A673 (cell line): ENCODE measurements at regions of chrX and their contacts with region 1.

Region 1: DNA sequence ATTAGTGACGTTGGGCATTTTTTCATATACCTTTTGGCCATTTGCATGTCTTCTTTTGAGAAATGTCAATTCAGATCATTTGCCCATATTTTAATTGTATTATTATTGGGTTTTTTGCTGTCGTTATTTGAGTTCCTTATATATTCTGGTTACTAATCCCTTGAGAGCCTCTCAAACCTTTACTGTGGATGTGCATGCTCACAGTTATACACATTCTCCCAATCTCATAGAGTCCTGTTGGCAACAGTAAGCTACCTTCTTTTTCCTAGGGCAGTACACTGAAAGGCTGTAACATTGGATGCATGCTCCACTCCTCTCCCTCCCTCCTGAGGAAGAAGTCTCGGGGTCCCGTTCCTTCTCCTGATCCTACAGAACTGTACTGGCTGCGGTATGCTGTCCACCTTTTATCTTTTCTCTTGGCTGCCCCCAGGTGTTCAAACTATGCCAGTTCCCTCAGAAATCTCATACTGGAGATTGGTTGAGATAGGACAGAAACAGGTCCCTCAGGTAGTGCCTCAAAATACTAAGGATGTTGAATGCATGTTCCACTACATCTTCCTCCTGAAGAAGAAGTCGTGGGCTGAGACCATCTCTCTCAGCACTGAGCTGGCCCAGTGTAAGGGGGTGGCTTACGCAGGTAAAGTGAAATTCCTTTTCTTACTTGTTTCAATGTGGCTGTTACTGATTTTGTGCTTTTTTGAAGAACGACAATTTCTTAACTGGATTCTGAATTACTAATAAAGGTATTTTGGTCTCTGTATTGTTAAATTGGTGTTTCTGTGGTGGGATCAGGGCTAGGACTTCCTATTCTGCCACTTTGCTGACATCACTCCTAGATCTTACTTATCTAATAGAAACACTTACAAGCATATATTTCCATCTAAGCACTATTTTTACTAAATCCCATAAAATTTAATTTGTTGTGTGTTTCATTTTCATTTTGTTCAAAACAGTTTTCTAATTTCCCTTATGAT is 145.4 kb upstream of the HUWE1 start:
- DNase-seq: peak; percentile 50
- H3K4me3 ChIP-seq: no peak overlapping the region
- H3K27ac ChIP-seq: no peak overlapping the region
- H3K4me1 ChIP-seq: no peaks in the 10 kb centered on the region
- H3K27me3 ChIP-seq: no peaks in the 10 kb centered on the region
- CTCF ChIP-seq: peak; percentile 59

Region 2: GRCh38 chrX:53683556-53684414 is 148.2 kb before region 1 on chrX:
- CTCF ChIA-PET with region 1: no interaction called
- POLR2A ChIA-PET with region 1: no interaction called
- intact Hi-C with region 1: loop called (anchors 10 kb)
- DNase-seq: peak; percentile 98
- H3K4me3 ChIP-seq: peak overlapping the region; percentile 67
- H3K27ac ChIP-seq: peak overlapping the region; percentile 96
- H3K4me1 ChIP-seq: no peaks in the 10 kb centered on the region
- H3K27me3 ChIP-seq: no peaks in the 10 kb centered on the region
- CTCF ChIP-seq: no peak

Region 3: DNA sequence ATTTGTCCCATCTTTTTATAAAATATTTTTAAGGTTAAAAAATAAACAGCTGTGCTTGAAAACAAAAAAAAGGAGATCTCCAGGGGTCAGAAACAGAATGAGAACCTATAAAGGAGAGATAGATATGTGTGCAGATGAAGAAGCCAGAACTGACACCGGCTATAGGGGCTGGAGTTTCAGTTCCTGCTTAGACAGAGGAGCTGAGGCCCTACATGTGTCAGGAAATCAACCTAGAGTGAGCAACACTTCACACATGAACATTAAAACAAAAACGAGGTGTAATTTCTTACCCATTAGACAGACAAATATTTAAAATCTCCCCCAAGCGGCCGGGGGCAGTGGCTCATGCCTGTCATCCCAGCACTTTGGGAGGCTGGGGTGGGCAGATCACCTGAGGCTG is 127.7 kb before region 1 on chrX:
- CTCF ChIA-PET with region 1: no interaction called
- POLR2A ChIA-PET with region 1: no interaction called
- intact Hi-C with region 1: no loop called
- DNase-seq: no peak
- H3K4me3 ChIP-seq: no peak overlapping the region
- H3K27ac ChIP-seq: no peak overlapping the region
- H3K4me1 ChIP-seq: no peaks in the 10 kb centered on the region
- H3K27me3 ChIP-seq: no peaks in the 10 kb centered on the region
- CTCF ChIP-seq: no peak